OCI-LY7 (cell line): ENCODE measurements at regions of chr12 and their contacts with region 1.

Region 1: DNA sequence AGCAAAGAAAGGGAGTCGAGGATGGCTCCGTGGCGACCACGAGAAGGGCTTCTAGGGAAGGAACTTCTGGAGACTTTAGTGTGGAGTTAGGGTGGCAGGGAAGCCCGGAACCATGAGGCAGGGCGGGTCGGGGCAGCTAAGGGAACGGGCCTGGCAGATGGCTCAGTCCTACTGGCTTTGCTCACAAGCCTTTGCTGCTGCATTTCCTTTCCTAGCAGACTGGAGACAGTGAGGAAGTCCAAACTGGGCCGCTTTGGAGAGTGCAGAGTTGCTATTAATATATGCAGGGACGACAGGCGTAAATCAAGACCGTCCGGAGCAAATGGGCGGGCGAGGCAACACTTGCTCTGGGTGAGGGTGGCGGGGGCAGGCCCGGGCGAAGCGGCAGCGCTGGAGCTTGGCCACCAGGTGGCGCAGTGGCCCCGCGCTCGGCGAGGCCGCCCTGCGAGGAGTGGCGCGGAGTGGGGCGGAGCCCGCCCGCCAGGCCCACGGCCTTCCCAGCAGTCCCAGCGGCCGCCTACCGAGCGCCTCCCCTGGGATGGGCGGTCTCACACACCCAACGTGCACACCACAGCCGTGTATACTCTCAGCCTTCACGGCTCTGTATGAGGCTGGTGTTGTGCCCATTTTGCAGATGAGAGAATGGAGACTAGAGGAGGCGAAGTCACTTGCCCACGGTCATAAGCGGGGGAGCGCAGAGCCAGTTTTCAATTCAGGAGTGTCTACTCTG is 24.4 kb upstream of the LRTM2 start:
- DNase-seq: peak; percentile 93
- H3K4me3 ChIP-seq: peak overlapping the region; percentile 66
- H3K27ac ChIP-seq: no peak overlapping the region
- H3K4me1 ChIP-seq: peaks cover 31% of the 10 kb centered on the region
- CTCF ChIP-seq: peak; percentile 95

Region 2: GRCh38 chr12:1650260-1650977 is 145.5 kb before region 1 on chr12:
- CTCF ChIA-PET with region 1: interaction called, 16 read pairs
- POLR2A ChIA-PET with region 1: interaction called, 4 read pairs
- intact Hi-C with region 1: loop called (anchors 1 kb)
- DNase-seq: no peak
- H3K4me3 ChIP-seq: no peak overlapping the region
- H3K27ac ChIP-seq: no peak overlapping the region
- H3K4me1 ChIP-seq: no peaks in the 10 kb centered on the region
- CTCF ChIP-seq: no peak

Region 3: GRCh38 chr12:1939801-1940607 is 144.1 kb after region 1 on chr12:
- CTCF ChIA-PET with region 1: interaction called, 8 read pairs
- POLR2A ChIA-PET with region 1: no interaction called
- intact Hi-C with region 1: loop called (anchors 1 kb)
- DNase-seq: peak; percentile 80
- H3K4me3 ChIP-seq: no peak overlapping the region
- H3K27ac ChIP-seq: no peak overlapping the region
- H3K4me1 ChIP-seq: no peaks in the 10 kb centered on the region
- CTCF ChIP-seq: peak; percentile 100

Region 4: DNA sequence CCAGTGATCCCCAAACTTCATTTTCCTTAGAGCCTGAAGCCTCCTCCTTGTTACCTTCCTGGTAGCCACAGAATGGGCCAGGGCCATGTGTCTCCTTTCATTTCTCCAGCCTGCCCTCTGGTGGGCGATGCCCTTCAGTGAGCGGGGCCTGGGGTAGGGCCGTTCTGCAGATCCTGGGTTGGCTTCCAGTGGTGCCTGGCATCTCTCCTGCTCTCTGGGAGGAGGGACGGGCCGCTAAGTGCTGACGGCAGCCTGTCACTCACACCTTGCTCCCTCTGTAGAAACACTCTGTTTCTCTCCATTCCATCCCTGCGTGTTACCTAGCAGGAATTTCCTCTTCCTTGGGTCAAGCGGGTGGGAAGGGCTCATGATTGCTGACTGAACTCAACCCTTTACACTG is 488.9 kb after region 1 on chr12:
- CTCF ChIA-PET with region 1: no interaction called
- POLR2A ChIA-PET with region 1: no interaction called
- intact Hi-C with region 1: loop called (anchors 10 kb)
- DNase-seq: peak; percentile 87
- H3K4me3 ChIP-seq: no peak overlapping the region
- H3K27ac ChIP-seq: peak overlapping the region; percentile 5
- H3K4me1 ChIP-seq: peaks cover 27% of the 10 kb centered on the region
- CTCF ChIP-seq: peak; percentile 92

Region 5: GRCh38 chr12:2613326-2614073 is 817.5 kb after region 1 on chr12:
- CTCF ChIA-PET with region 1: no interaction called
- POLR2A ChIA-PET with region 1: no interaction called
- intact Hi-C with region 1: no loop called
- DNase-seq: no peak
- H3K4me3 ChIP-seq: no peak overlapping the region
- H3K27ac ChIP-seq: no peak overlapping the region
- H3K4me1 ChIP-seq: no peaks in the 10 kb centered on the region
- CTCF ChIP-seq: no peak